ENCODE measurements at regions of chr3 and their contacts with region 1.

Region 1: DNA sequence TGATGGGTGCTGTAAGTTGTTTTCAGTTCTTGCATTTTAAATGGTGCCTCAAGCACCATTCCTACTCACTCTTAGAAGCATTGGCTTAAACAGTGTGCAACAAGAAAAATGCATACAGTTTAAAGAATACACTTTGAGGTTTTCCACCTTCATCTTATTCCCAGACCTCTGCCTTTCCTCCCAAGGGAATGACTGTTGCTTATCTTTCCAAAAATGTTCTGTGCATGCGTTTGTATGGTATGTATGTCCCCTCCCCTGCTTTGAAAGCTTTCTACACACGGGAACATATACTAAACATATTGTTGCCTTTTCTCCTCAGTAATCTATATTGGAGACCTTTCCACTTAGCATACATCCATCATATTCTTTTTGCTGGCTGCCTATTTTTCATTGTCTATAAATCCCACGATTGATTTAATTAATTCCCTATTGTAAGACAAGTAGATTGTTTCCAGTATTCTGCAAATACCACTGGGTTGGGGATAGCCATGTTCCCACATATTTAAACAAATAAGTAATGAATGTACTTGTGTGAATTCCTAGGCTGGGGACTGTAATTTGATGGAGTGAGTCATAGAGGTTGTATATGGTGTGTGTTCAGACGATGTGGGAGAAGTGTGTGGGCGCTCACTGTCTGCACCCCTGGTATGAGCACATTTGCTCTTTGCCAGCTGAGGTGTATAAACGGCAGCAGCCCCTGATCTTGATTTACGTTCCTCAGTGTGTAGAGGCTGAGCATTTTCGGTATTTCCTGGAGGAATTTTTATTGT is 5.8 kb downstream of the TRAK1 start:
- DNase-seq: no peak
- CTCF ChIP-seq: no peak

Region 2: DNA sequence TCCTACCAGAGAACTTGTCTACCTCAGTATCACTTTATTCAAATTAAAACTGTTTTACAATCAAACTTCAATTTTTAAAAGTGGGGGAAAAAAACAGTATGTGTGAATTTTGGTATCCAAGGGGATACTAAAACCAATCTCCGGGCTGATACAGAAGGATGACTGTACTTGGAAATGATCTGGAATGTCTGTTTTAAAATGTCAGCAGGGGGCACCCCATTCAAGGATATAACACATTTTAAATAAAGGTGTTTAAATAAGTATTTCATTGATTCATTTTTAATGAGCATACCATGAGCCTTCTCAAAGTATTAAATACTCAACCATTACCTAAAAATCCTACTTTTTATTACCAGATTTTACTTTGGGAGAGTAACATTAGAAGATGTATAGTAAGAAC is 203.0 kb before region 1 on chr3:
- in situ Hi-C with region 1: loop called (anchors 5 kb)
- DNase-seq: peak; percentile 39
- CTCF ChIP-seq: peak; percentile 45

Region 3: DNA sequence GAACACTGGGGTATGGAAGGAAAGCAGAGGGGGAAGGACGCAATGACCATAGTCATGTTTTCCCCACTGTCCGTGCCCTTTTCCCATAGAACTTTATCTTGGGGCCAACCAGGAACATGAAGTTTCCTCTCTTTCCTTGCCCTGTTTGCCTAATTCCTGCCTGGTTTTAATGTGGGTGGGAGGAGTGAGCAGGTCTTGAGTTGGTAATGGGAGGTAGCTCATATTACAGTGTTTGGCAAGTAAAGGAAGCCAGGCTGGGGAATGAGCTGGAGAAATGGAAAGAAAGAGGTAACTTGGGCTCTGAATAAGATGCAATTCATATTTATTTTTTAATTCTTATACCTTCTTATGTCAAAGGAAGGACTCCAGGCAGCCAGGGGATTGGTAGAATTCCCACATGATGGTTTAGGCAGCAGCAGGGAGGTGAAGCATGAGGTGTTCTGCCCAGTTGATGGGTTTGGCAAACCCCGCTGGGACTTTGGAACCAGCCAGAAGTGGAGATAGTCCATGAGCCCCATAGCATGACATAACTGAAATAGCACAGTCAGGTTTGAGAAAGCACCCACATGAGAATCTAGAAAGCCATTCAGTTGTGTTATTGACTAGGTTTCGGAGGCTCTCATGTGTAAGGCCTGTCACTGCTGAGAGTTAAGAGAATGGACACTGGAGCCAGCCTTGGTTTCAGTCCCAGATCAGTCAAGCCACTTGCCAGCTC is 109.0 kb after region 1 on chr3:
- in situ Hi-C with region 1: no loop called
- DNase-seq: peak; percentile 85
- CTCF ChIP-seq: no peak

Measured in GM13977 (cell line).